ENCODE measurements at regions of chr13 and their contacts with region 1.

Region 1: DNA sequence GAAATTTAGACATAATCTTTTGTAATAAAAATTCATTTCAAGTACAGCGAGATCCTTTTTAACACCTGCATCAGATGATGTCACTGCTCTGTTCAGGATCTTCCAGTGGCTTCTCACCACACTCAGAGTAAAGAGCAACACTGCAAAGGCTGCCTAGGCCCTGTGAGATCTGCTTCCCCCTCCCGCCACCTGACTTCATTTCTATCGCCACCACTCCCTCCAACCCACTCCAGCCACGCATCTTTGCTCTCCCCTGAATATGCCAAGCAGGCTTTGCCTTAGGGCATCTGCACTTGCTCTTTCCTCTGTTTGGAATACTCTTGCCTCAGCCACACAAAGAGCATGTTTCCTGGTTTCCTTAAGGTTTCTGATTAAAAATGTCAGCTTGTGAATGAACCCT is 58.3 kb downstream of the MBNL2 start:
- DNase-seq: no peak
- H3K4me3 ChIP-seq: no peak overlapping the region
- CTCF ChIP-seq: no peak
- POLR2A ChIP-seq: no peak

Region 2: DNA sequence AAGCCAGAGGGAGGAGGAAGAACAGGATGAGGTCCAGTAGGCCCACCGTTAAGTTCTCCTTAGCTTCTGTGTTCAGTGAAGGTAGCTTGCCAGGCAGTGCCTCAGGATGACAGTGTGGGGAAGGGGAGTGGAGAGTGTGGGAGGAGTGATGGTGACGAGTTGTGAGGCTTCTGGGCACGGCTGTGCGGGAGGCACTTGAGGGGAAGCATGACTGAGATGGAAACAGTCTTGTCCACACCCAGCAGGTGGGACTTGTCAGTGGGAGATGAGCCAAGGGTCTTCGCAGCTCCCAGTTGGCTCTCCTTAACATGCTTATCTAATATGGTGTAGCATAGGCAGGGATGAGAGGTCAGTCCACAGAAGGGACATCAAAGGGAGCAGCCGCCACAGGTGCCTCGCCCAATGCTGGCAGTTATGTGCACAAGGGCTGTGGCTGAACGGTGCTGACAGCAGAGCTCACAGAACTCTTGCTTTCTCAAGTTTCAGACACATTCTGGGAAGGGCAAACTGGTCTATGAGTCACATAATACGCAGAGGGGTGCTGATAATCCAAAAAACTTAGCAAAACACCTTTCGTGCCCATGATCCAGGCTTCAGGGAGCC is 333.7 kb before region 1 on chr13:
- intact Hi-C with region 1: no loop called
- DNase-seq: no peak
- H3K4me3 ChIP-seq: no peak overlapping the region
- CTCF ChIP-seq: no peak
- POLR2A ChIP-seq: no peak

Region 3: GRCh38 chr13:97235549-97236231 is 44.8 kb before region 1 on chr13:
- intact Hi-C with region 1: loop called (anchors 2 kb)
- DNase-seq: no peak
- H3K4me3 ChIP-seq: no peak overlapping the region
- CTCF ChIP-seq: no peak
- POLR2A ChIP-seq: no peak

Region 4: GRCh38 chr13:97319113-97319720 is 38.7 kb after region 1 on chr13:
- intact Hi-C with region 1: no loop called
- DNase-seq: no peak
- H3K4me3 ChIP-seq: no peak overlapping the region
- CTCF ChIP-seq: no peak
- POLR2A ChIP-seq: no peak

Region 5: DNA sequence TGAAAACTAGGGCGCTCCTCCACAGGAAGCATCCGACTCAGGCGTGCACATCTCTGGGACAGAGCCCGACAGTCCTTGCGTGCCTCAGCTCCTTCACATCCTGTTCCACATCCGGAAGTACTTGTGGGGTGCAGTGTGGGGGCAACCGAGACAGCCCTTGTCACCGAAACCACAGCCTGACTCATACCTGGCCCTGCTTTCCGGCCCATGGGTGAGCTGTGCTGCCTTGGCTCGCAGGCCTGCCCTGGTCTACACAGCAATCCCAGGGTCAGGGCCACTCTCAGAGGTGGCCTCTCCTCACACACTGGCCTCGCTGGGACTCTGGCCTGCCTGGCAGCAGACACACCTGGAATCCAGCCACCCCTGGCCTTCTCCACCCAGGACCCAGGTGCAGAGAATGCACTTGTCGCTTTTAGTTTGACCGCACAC is 1196.1 kb after region 1 on chr13:
- intact Hi-C with region 1: loop called (anchors 10 kb)
- DNase-seq: peak in 1 of 2 donors; percentile 92
- H3K4me3 ChIP-seq: no peak overlapping the region
- CTCF ChIP-seq: no peak
- POLR2A ChIP-seq: no peak